ENCODE measurements at regions of chr1 and their contacts with region 1.

Region 1: DNA sequence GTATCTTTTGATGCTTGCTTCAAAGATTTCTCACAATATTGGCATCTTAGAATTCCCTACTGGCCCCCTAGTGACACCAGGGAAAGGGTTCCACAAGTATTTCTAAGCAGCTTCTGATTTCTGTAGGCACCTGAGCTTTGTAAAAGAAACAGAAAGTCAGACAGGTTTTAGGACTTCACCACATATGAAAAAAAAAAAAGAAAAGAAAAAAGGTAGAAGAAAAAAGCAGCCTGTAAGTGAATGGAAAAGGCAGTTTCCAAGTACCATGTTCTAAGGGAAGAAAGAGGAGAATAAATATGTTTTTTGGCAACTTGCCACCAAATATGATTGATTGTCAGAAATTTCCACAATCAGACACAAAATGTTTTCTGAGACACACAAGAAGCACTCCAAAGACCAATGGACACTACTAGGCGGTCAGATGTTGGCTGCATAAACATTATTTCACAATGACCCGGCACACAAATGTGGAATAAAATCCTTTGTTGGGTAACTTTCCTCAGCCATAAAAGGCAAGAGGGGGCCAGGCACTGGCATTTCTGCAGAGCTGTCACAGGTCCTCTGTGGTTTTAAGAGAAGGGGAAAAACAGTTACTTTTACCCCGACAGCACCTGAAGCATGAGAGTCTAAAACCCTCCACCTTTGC is 12.7 kb upstream of the CPLANE2 start:
- DNase-seq: no peak
- H3K4me3 ChIP-seq: peak overlapping the region in 1 of 4 donors; percentile 8
- H3K27ac ChIP-seq: peak overlapping the region; percentile 65 to 91 (median 88)
- H3K4me1 ChIP-seq: peaks cover 21 to 83% (median 51%) of the 10 kb centered on the region in 3 donors
- H3K27me3 ChIP-seq: no peaks in the 10 kb centered on the region
- CTCF ChIP-seq: no peak
- POLR2A ChIP-seq: no peak

Region 2: DNA sequence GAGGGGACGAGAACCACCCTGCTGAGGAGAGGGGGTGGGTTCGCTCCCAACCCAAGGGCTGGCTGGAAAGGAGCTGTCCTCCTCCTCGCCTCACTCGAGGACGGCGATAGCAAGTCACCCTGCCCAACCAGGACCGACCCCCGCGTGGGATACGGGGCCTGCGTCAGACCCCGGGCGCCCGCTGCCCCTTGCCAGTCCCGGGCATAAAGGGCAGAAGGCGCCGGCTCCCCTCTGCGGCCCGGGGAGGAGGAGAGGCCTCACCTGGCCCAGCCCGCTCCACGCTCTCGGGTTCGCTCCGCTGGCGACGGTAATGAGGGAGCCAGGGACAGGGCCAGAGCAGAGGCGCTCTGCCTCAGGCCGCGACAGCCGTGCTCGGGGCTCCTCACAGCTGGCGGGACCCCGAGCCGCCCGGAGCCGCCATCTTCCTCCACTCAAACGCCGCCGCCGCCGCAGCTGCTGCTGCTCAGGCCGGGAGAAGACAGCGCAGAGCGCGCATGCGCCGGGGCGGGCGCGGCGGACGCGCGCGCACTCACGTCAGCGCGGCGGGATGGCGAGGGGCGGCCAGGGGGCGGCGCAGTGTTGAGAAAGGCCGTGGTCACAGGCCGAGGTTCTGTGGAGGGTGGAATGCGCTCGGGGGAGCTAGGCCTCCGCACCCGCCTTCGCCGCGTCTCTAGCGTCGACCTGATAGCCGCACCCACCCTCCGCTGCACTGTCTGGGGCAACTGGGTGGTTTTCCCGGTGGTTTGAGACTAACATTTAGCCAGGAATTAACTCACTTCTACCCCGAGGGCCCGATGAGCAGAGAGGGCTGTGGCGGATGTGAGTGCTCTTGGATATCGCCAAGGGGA is 102.5 kb after region 1 on chr1 and contains the start of gene FBXO42:
- intact Hi-C with region 1: loop called (anchors 10 kb)
- DNase-seq: peak; percentile 62
- H3K4me3 ChIP-seq: peak within 1 kb of the TSS; percentile 76 to 96 (median 87)
- H3K27ac ChIP-seq: peak within 1 kb of the TSS; percentile 94 to 99 (median 96)
- H3K4me1 ChIP-seq: peaks cover 11 to 49% (median 27%) of the 10 kb centered on the region in 3 donors
- H3K27me3 ChIP-seq: no peaks in the 10 kb centered on the region
- CTCF ChIP-seq: peak in 5 of 6 experiments; percentile 28 to 67 (median 51)
- POLR2A ChIP-seq: peak in 3 of 4 donors; percentile 82 to 97 (median 89)
- total RNA-seq, gene FBXO42: 15.9 to 29.0 (median 20.2) TPM

Region 3: GRCh38 chr1:16430606-16431005 is 180.9 kb after region 1 on chr1:
- intact Hi-C with region 1: no loop called
- DNase-seq: no peak
- H3K4me3 ChIP-seq: no peak overlapping the region
- H3K27ac ChIP-seq: no peak overlapping the region
- H3K4me1 ChIP-seq: no peaks in the 10 kb centered on the region
- H3K27me3 ChIP-seq: peaks cover 0 to 7% (median 0%) of the 10 kb centered on the region in 4 donors
- CTCF ChIP-seq: no peak
- POLR2A ChIP-seq: no peak

Measured in esophagus squamous epithelium (tissue), 5 donors.